GM12878 (cell line): ENCODE measurements at regions of chr3 and their contacts with region 1.

Region 1: DNA sequence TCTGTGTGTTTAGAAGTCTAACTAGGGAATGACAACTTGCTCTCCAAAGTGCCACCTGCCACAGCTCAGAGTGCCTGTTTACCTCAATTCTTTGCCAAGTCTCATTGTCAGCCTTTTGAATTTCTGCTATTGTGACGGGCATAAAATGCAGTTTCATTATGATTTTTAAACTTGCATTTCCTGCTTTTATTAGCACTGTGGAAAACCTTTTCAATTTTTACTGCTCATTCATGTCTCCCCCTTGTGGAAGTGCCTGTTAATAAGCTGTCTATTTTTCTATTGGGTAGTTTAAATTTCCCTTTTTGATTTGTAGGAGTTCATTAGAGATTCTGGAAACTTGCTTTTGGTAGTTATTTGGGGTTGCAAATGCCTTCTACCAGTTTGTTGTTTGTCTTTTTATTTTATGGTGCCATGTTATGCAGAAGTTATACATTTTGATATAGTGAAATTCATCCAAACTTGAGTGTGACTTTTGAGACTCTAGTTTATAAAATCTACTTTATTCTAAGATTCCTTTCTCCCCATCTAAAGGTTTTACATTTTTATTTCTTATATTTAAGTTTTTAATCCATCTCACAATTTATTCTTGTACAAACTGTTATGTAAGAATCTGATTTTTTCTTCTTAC is 53.9 kb upstream of the FRMD4B start:
- DNase-seq: peak; percentile 16
- ATAC-seq: peak; percentile 31
- H3K4me3 ChIP-seq: no peak overlapping the region
- H3K27ac ChIP-seq: no peak overlapping the region
- H3K4me1 ChIP-seq: 0 out of 2 replicates have a peak, but pooled peaks cover 2% of the 10 kb centered on the region
- H3K27me3 ChIP-seq: no peaks in the 10 kb centered on the region
- CTCF ChIP-seq: peak; percentile 50 to 64 (median 54)
- EP300 ChIP-seq: no peak
- POLR2A ChIP-seq: no peak
- RAD21 ChIP-seq: peak; percentile 53

Region 2: DNA sequence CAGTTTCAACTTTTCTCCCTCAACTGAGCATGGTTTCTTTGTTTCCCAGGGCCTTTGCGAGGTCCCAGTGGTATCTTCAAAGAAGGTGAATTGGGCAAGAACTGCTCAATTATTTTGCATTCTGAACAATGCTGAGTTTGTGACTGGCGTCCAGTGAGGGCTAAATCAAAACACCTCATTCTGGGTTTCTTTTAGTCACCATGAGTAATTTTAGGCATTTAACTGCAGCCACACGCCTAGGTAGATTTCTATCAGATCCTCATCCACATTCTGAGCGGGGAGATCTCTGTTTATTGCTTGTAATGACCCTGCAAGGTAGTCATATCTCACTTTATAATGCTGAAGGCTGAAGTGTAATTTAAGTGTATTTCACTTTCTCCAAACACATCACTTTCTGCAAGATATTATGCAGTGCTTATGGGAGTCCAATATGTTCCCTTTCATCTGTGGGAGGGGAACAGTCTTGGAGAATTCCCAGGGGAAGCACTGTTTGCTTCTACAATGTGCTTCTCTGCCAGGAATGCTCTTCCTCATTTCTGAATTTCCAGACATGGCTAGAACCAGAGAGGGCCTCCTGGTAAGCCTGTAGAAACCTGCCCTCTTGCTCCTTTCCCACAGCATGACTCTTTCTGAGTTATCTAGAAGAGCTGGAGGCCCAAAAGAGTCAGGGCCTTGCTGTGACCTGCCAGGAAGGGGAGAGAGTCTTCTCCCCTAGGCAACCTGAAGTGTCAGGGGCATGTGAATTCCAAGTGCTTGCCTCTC is 145.6 kb before region 1 on chr3:
- CTCF ChIA-PET with region 1: no interaction called
- POLR2A ChIA-PET with region 1: no interaction called
- RAD21 ChIA-PET with region 1: no interaction called
- SMC1A ChIA-PET with region 1: no interaction called
- in situ Hi-C with region 1: no loop called
- intact Hi-C with region 1: no loop called
- DNase-seq: no peak
- ATAC-seq: peak; percentile 89
- H3K4me3 ChIP-seq: no peak overlapping the region
- H3K27ac ChIP-seq: no peak overlapping the region
- H3K4me1 ChIP-seq: peaks cover 5% of the 10 kb centered on the region
- H3K27me3 ChIP-seq: no peaks in the 10 kb centered on the region
- CTCF ChIP-seq: no peak
- EP300 ChIP-seq: peak in 1 of 2 experiments; percentile 35; a peak in 1 of 4 replicates
- POLR2A ChIP-seq: no peak
- RAD21 ChIP-seq: no peak

Region 3: GRCh38 chr3:69400683-69401082 is 39.1 kb before region 1 on chr3:
- CTCF ChIA-PET with region 1: no interaction called
- POLR2A ChIA-PET with region 1: no interaction called
- RAD21 ChIA-PET with region 1: no interaction called
- SMC1A ChIA-PET with region 1: no interaction called
- in situ Hi-C with region 1: no loop called
- intact Hi-C with region 1: no loop called
- DNase-seq: no peak
- ATAC-seq: no peak
- H3K4me3 ChIP-seq: no peak overlapping the region
- H3K27ac ChIP-seq: no peak overlapping the region
- H3K4me1 ChIP-seq: no peaks in the 10 kb centered on the region
- H3K27me3 ChIP-seq: no peaks in the 10 kb centered on the region
- CTCF ChIP-seq: no peak
- EP300 ChIP-seq: no peak
- POLR2A ChIP-seq: no peak
- RAD21 ChIP-seq: no peak

Region 4: DNA sequence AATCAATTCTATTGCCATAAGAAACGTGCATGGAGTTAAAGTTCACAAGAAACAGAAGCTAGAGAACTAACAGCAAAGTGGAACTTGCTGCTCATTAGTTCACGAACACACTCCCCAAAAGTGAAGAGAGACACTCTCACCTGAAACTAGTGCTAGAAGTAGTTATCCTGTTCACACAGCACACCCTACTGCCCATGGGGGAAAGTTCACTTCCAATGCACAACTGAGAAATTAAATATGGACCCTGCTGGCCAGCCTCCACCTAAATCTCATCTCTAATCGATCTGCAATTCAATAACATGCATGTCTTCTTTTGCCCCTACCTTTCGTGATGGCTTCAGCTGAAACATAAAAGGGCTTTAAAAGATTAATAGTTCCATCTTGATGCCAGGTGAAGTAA is 14.5 kb before region 1 on chr3:
- CTCF ChIA-PET with region 1: interaction called, 48 read pairs
- POLR2A ChIA-PET with region 1: interaction called, 4 read pairs
- RAD21 ChIA-PET with region 1: interaction called, 14 read pairs
- SMC1A ChIA-PET with region 1: interaction called, 67 read pairs
- in situ Hi-C with region 1: no loop called
- intact Hi-C with region 1: no loop called
- DNase-seq: no peak
- ATAC-seq: peak; percentile 92
- H3K4me3 ChIP-seq: no peak overlapping the region
- H3K27ac ChIP-seq: no peak overlapping the region
- H3K4me1 ChIP-seq: no peaks in the 10 kb centered on the region
- H3K27me3 ChIP-seq: no peaks in the 10 kb centered on the region
- CTCF ChIP-seq: peak; percentile 67 to 72 (median 68)
- EP300 ChIP-seq: no peak
- POLR2A ChIP-seq: no peak
- RAD21 ChIP-seq: peak; percentile 78

Region 5: DNA sequence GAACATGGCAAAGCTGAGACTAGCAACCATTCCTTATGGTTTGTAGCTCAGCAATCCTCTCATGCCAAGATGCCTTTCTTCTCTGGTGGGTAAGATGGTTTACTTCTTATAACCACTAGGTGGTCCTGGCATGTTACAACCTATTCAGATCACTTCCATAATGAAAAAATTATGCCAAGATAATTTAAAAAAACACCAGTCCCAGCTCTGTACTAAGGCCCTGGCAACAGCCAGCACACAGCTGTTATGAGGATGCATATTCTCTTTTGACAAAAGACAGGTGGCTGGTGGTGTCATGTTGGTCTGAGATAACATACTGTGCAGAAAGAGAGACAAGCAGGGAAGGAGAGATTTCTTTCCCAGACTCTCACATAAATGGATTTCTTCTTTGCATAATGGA is 11.8 kb after region 1 on chr3:
- CTCF ChIA-PET with region 1: interaction called, 34 read pairs
- POLR2A ChIA-PET with region 1: no interaction called
- RAD21 ChIA-PET with region 1: interaction called, 3 read pairs
- SMC1A ChIA-PET with region 1: interaction called, 12 read pairs
- in situ Hi-C with region 1: no loop called
- intact Hi-C with region 1: no loop called
- DNase-seq: no peak
- ATAC-seq: peak; percentile 61
- H3K4me3 ChIP-seq: no peak overlapping the region
- H3K27ac ChIP-seq: no peak overlapping the region
- H3K4me1 ChIP-seq: no peaks in the 10 kb centered on the region
- H3K27me3 ChIP-seq: no peaks in the 10 kb centered on the region
- CTCF ChIP-seq: peak in 1 of 3 experiments; percentile 11; a peak in 1 of 6 replicates
- EP300 ChIP-seq: no peak
- POLR2A ChIP-seq: no peak
- RAD21 ChIP-seq: no peak

Region 6: GRCh38 chr3:69532544-69533224 is 92.9 kb after region 1 on chr3:
- CTCF ChIA-PET with region 1: no interaction called
- POLR2A ChIA-PET with region 1: no interaction called
- RAD21 ChIA-PET with region 1: no interaction called
- SMC1A ChIA-PET with region 1: no interaction called
- in situ Hi-C with region 1: no loop called
- intact Hi-C with region 1: no loop called
- DNase-seq: no peak
- ATAC-seq: no peak
- H3K4me3 ChIP-seq: no peak overlapping the region
- H3K27ac ChIP-seq: no peak overlapping the region
- H3K4me1 ChIP-seq: no peaks in the 10 kb centered on the region
- H3K27me3 ChIP-seq: no peaks in the 10 kb centered on the region; a peak in 1 of 4 replicates
- CTCF ChIP-seq: no peak
- EP300 ChIP-seq: no peak
- POLR2A ChIP-seq: no peak
- RAD21 ChIP-seq: no peak

Region 7: DNA sequence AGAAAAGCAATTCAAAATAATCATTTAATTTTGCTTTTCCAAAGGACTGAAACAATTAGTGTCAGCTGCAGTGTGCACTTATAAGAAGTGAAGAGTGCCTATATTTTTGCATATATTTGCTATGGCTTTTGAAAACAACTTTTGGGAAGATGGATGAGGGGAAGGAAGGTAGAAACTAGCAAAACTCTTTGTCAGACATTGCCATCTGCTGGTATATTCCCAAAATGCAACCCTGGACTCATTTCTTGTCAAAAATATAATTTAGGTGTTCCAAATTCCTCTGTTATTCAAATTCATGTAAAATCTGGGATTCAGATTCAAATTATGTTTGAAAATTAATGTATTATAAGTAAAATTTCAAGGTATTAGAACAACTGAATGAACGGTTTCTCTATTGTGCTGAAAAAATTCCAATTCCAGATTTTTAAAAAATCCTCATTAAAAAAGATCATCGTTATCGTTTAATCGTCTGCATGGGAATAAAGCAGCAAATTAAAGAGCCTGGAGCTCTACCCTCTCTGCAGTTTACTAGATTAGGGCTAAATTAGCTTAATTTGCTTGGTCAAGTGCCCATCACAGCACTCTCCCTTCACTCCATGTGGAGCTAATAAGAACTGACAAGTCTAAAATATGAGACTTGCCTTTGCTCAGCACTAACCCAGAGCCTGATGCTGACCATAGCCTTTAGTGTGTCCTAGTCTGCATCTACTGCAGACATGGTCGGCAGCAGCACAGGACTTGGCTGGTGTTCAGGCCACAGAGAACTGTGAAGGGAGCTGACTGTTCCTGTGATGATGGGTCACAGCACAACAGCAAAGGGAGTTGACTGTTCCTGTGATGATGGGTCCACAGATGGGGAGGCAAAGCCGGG is 231.6 kb after region 1 on chr3:
- CTCF ChIA-PET with region 1: interaction called, 10 read pairs
- POLR2A ChIA-PET with region 1: no interaction called
- RAD21 ChIA-PET with region 1: interaction called, 3 read pairs
- SMC1A ChIA-PET with region 1: interaction called, 5 read pairs
- in situ Hi-C with region 1: no loop called
- intact Hi-C with region 1: no loop called
- DNase-seq: no peak
- ATAC-seq: peak; percentile 51; the same call in 1 of the 3 replicates
- H3K4me3 ChIP-seq: no peak overlapping the region
- H3K27ac ChIP-seq: no peak overlapping the region
- H3K4me1 ChIP-seq: no peaks in the 10 kb centered on the region
- H3K27me3 ChIP-seq: no peaks in the 10 kb centered on the region
- CTCF ChIP-seq: peak; percentile 50 to 63 (median 53); a peak in 5 of 6 replicates
- EP300 ChIP-seq: no peak
- POLR2A ChIP-seq: no peak
- RAD21 ChIP-seq: peak; percentile 69